Calu3 (cell line): ENCODE measurements at regions of chr12 and their contacts with region 1.

Region 1: GRCh38 chr12:5171701-5172100 is 128.0 kb downstream of the KCNA5 start:
- DNase-seq: peak; percentile 36
- H3K4me3 Mint-ChIP-seq: no peak overlapping the region
- H3K27ac Mint-ChIP-seq: no peak overlapping the region
- H3K4me1 Mint-ChIP-seq: no peaks in the 10 kb centered on the region
- H3K27me3 Mint-ChIP-seq: peaks cover 32% of the 10 kb centered on the region
- CTCF ChIP-seq: peak; percentile 18

Region 2: DNA sequence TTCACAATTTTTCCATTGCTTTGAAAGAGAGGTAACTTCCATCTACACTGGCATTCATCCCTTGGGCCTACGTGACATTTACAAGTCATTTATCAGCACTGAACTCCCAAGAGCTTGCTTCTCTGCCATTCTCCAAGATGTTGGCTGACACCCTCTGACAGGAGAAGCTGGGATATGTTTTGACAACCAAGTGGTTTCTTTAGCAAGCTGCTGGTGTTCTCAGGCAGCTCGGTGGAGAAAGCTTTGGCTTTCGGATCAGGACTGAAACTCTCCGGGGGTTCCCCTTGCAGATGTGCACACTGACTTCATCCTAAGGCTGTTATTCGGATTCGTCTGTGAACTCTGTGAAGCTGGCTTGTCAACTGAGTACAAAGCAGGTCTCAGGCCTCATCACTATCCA is 112.3 kb before region 1 on chr12:
- CTCF ChIA-PET with region 1: no interaction called
- intact Hi-C with region 1: no loop called
- DNase-seq: no peak
- H3K4me3 Mint-ChIP-seq: no peak overlapping the region
- H3K27ac Mint-ChIP-seq: no peak overlapping the region
- H3K4me1 Mint-ChIP-seq: no peaks in the 10 kb centered on the region
- H3K27me3 Mint-ChIP-seq: peaks cover 68% of the 10 kb centered on the region
- CTCF ChIP-seq: no peak

Region 3: GRCh38 chr12:5276327-5276880 is 104.7 kb after region 1 on chr12:
- CTCF ChIA-PET with region 1: no interaction called
- intact Hi-C with region 1: no loop called
- DNase-seq: no peak
- H3K4me3 Mint-ChIP-seq: no peak overlapping the region
- H3K27ac Mint-ChIP-seq: no peak overlapping the region
- H3K4me1 Mint-ChIP-seq: no peaks in the 10 kb centered on the region
- H3K27me3 Mint-ChIP-seq: no peaks in the 10 kb centered on the region
- CTCF ChIP-seq: no peak

Region 4: GRCh38 chr12:5648692-5649359 is 477.1 kb after region 1 on chr12:
- CTCF ChIA-PET with region 1: no interaction called
- intact Hi-C with region 1: loop called (anchors 10 kb)
- DNase-seq: peak; percentile 1
- H3K4me3 Mint-ChIP-seq: no peak overlapping the region
- H3K27ac Mint-ChIP-seq: no peak overlapping the region
- H3K4me1 Mint-ChIP-seq: no peaks in the 10 kb centered on the region
- H3K27me3 Mint-ChIP-seq: peaks cover 20% of the 10 kb centered on the region
- CTCF ChIP-seq: no peak